Upper lobe of right lung (tissue), 1 donor: ENCODE measurements at regions of chr17 and their contacts with region 1.

Region 1: DNA sequence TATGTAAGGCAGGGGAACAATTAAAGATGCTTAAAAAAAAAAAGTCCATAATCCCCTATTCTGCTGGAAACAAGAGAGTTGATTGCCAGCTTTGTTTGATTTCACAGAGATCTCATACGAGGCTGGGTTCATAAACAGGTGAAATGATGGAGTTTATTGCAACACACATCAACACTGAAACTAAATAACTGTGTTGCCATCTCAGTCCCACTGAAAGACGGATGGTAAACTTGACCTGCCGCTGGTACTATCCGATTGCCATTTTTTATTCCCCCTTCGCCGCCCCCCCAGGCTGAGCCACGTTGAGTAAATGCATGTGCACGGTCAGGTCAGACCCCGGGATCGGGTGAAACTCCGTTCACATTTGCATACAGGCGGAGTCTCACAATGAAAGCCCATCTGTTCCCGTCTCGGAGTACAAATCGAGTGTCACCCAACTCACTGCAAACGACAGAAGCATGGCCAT is 119.2 kb downstream of the SKAP1 start:
- DNase-seq: no peak
- ATAC-seq: no peak
- H3K4me3 ChIP-seq: no peak overlapping the region
- H3K27ac ChIP-seq: no peak overlapping the region
- H3K4me1 ChIP-seq: no peaks in the 10 kb centered on the region
- H3K27me3 ChIP-seq: peaks cover 78% of the 10 kb centered on the region
- CTCF ChIP-seq: no peak

Region 2: DNA sequence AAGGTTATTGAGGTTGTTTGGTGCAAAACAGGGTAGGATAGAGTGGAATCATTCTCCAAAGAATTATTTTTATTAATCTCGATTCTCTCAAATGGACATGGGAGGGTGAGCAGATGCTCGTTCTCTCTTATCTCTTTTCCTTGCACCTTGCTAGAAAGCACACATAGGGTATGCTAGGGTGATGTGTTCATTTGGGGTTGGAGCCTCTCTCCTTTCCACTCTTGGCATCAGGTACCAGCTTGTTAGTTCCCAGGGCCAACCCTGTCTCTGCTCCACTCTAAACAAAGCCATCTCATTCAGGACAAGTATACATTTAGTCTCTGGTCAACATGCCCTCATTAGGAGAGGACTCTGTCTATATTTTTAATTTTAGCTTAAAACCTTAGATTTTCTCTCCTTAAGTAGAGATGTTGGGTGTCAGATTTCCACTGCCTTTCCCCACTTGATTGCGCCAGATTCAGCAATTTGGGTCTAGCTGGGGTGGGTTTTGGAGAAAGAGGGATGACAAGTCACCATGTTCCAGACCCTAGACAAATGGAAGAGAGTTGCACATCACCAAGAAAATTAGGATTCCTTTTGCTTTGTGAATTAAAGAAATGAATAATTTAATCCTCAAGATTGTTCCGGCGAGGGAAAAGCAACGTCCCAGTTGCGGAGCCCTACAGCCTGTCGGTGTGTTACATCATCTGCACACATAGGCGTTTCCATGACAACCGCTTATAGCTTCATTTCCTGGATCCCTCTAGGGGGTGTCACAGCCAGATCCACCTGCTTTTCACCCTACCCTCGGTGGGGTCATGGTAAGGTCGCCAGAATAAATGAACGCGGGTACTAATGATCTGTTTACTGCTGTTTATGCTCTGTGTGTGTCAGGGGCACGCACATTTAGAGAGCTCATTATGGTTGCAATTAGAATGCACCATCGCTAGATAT is 161.7 kb before region 1 on chr17:
- intact Hi-C with region 1: no loop called
- DNase-seq: no peak
- ATAC-seq: no peak
- H3K4me3 ChIP-seq: no peak overlapping the region
- H3K27ac ChIP-seq: no peak overlapping the region
- H3K4me1 ChIP-seq: no peaks in the 10 kb centered on the region
- H3K27me3 ChIP-seq: peaks cover 55% of the 10 kb centered on the region
- CTCF ChIP-seq: no peak

Region 3: GRCh38 chr17:48453447-48453846 is 142.7 kb after region 1 on chr17:
- intact Hi-C with region 1: no loop called
- DNase-seq: no peak
- ATAC-seq: no peak
- H3K4me3 ChIP-seq: no peak overlapping the region
- H3K27ac ChIP-seq: no peak overlapping the region
- H3K4me1 ChIP-seq: no peaks in the 10 kb centered on the region
- H3K27me3 ChIP-seq: peaks cover 13% of the 10 kb centered on the region
- CTCF ChIP-seq: no peak

Region 4: DNA sequence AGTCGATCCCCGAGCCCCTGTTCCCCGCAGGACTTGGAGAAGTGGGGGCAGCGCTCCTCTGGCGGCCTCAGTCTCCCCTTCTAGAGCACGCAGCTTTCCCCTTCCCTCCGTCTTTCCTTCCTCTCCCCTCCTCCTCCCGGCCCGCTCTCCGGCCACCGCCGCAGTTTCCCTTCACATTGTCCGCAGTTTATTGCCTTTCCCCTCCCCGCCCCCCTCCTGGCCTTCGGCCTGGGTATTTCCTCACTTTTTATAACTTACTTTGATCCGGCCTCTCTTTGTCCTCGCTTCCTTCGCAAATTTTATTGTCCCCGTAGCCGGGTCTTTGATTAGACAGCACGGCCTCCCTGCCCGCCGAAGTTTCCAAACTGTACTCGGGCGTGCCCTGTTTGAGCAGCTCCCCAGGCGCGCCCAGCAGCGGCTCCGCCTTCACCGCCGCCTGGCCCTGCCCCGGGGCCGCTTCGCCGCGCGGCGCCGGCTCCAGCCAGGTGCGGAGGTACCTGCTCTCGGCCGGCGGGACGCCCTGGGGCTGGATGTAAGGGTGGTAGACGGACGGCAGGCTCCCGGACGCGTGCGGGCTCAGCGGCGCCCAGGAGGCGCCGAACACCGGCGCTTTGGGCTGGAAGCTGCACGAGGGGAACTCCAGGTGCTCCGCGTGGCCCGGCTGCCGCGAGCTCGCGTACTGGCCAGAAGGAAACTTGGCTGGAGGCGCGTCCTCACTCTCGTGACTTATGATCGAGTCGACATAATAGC is 314.9 kb after region 1 on chr17:
- intact Hi-C with region 1: loop called (anchors 10 kb)
- DNase-seq: no peak
- ATAC-seq: peak; percentile 70
- H3K4me3 ChIP-seq: peak overlapping the region; percentile 31
- H3K27ac ChIP-seq: no peak overlapping the region
- H3K4me1 ChIP-seq: peaks cover 22% of the 10 kb centered on the region
- H3K27me3 ChIP-seq: peaks cover 100% of the 10 kb centered on the region
- CTCF ChIP-seq: no peak